ENCODE measurements at regions of chr14 and their contacts with region 1.

Region 1: DNA sequence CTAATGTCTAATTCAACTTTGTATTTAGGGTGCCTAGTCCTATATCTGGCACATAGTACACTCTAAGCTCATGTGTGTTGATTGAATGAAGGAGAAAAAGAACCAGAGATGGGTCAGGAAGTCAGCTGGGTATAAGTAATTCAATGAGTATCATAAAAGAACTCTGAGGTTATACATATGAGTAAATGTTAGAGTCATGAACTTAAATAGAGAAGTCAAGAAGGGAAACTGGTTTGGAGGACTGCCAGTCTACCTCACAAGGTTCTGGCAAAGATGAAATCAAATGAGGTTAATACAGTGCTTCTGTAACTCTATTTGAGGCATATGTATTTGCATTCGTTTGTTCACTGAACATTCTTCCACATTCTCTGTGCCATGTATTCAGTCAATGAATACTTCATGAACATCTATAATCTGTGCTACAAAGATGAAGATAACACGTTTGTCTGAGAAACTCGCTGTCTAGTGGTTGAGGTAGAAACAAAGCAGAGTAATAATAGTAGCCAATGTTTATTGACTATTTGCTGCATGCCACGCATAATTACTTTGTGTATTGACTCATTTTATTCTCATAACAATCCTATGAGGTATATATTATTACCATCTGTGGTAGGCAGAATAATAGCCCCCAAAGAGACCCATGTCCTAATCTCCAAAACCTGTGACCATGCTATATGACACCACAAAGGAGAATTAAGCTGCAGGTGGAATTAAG is 88.9 kb downstream of the PTGER2 start:
- DNase-seq: peak; percentile 70
- H3K4me3 Mint-ChIP-seq: peak overlapping the region; percentile 28
- H3K27ac Mint-ChIP-seq: peak overlapping the region; percentile 75
- H3K4me1 Mint-ChIP-seq: peaks cover 71% of the 10 kb centered on the region
- H3K27me3 Mint-ChIP-seq: peaks cover 1% of the 10 kb centered on the region

Region 2: DNA sequence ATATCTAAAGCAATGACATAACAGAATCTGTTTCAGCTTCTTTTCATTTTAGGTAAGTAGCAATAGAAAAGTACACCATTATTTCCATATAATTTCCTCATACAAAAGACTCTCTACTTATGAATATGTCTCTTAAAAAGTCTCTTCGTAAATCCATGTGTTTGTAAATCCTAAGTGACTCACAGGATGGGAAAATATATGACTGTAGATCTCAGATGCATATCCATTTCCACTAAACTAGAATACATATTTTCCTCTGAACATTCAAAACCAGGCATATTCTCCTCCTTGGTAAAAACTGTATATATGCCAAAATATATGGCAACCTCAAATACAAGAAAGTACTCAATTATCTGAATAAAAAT is 55.7 kb after region 1 on chr14:
- intact Hi-C with region 1: loop called (anchors 2 kb)
- DNase-seq: no peak
- H3K4me3 Mint-ChIP-seq: no peak overlapping the region
- H3K27ac Mint-ChIP-seq: no peak overlapping the region
- H3K4me1 Mint-ChIP-seq: peaks cover 15% of the 10 kb centered on the region
- H3K27me3 Mint-ChIP-seq: no peaks in the 10 kb centered on the region

Measured in activated CD4-positive, alpha-beta T cell treated with anti-CD3 and anti-CD28 coated beads, Interleukin-2, amount 10 ng/mL, durations not matched to agents 24 days and 14 days (primary cell).